GM10248 (cell line): ENCODE measurements at regions of chr14 and their contacts with region 1.

Region 1: GRCh38 chr14:50860478-50861086 is 11.3 kb upstream of the ABHD12B start:
- DNase-seq: peak; percentile 81
- CTCF ChIP-seq: peak; percentile 76

Region 2: GRCh38 chr14:50520947-50521815 is 339.4 kb before region 1 on chr14:
- CTCF ChIA-PET with region 1: no interaction called
- POLR2A ChIA-PET with region 1: no interaction called
- DNase-seq: peak; percentile 40
- CTCF ChIP-seq: no peak

Region 3: DNA sequence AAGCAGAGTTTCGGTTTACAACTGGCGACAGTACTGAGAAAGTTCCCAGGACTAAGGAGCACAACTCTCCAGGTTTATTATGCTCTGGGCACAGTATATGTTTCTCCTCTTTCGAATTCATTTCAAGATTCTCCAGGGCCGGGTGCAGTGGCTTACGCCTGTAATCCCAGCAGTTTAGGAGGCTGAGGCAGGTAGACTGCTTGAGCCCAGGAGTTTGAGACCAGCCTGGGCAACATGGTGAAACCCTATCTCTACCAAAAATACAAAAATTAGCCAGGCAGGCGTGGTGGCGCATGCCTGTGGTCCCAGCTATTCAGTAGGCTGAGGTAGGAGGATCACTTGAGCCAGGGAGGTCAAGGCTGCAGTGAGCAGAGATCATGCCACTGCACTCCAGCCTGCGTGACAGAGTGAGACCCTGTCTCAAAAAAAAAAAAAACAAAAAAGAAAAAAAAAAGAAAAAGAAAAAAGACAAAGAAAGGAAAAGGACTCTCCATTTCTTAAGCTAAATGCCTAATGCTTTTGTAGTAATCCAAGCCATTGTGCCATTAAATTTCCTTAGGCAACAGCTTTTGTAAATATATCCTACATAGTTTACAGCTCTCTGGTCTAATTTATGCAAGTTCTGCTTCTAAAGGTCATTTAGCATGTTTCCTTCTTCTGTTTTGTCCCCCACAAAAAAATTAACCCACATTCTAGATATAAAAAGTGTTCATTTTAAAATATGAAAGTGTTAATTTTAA is 265.8 kb before region 1 on chr14:
- CTCF ChIA-PET with region 1: interaction called, 22 read pairs
- POLR2A ChIA-PET with region 1: no interaction called
- DNase-seq: no peak
- CTCF ChIP-seq: no peak

Region 4: DNA sequence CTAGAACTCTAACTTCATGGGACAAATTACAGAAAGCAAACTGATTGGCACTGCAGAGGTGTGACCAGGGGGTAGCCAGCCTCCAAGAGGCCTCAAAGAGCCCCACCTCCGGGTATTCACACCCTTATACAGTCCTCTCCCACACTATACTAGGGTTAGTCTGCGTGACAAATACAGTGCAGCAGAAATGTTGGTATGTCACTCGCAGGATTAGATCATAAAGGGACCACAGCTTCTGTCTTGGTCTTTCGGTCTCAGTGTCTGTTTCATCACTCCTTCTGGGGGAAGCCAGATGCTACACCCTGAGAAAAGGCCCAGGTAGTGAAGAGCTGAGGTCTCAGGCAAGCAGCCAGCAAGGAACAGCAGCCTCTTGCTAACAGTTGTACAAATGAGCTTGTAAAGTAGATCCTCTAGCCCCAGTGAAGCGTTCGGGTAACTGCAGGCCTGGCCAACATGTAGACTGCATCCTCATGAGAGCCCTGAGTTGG is 123.6 kb before region 1 on chr14:
- CTCF ChIA-PET with region 1: interaction called, 16 read pairs
- POLR2A ChIA-PET with region 1: interaction called, 12 read pairs
- DNase-seq: peak; percentile 70
- CTCF ChIP-seq: no peak

Region 5: DNA sequence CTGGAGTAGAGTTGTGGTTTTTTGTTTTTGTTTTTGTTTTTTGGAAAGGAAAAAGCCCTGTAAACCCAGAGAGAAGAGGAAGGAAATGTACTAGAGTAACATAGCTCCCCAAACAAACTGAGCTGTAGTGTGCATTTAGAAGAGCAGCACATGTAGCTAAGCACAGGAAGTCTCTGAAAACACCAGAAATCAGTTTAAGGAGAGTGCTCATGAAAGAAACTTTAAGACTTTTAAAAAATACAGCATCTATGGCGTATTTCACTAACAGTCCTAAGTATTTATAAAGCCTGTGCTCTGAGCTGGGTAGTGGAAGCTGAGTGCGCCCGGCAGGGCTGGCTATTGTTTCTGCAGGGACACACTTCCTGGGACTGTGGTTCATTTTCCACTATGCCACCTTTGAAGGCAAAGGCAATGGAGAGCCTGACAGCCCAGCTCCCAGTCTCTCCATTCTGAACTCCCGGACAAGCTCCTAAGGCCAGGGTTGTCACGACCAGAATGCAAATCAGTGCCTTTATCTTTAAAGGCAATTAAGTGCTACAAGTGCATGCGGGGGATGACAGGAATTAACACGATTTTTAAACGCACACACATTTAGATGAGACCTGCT is 75.0 kb before region 1 on chr14:
- CTCF ChIA-PET with region 1: interaction called, 112 read pairs
- POLR2A ChIA-PET with region 1: no interaction called
- DNase-seq: no peak
- CTCF ChIP-seq: no peak

Region 6: DNA sequence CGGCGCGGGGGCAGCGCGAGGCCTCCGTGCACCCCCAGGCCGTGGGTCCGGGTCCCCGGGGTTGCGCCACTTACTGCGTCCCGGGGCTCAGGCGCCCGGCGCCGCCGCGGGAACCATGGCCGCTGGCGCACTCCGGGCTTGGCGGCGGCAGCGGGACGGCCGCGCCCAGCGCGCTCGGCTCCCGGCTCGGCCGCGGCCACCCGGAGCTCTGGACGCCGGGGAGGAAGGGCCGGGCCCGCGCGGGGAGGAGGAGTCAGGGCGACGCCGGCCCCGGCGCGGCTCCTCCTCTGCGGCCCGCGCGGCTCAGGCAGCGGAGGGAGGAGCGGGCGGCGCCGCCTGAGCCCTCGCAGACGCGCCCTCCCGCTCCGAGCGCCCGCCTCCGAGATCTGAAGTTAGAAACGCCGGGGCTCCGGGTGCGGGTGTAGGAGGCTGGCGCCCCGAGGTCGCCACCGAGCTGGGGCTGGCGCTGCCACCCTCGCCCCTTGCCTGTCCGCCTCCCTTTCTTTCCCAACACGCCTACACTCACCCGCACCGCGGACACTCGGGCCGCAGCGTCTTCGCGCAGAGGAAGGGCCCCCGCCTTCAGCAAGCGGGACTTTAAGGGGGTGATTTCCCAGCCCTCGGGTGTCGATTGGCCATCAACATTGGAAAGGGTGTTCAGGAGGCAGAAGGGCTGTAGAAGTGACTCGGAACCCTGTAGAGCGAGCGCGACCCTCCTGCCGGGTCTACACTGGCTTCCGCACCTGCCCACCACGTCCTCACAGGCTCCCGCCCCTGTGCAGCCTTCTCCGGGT is 29.5 kb before region 1 on chr14 and contains the start of gene NIN:
- CTCF ChIA-PET with region 1: interaction called, 41 read pairs
- POLR2A ChIA-PET with region 1: no interaction called
- DNase-seq: peak; percentile 89
- CTCF ChIP-seq: no peak

Region 7: DNA sequence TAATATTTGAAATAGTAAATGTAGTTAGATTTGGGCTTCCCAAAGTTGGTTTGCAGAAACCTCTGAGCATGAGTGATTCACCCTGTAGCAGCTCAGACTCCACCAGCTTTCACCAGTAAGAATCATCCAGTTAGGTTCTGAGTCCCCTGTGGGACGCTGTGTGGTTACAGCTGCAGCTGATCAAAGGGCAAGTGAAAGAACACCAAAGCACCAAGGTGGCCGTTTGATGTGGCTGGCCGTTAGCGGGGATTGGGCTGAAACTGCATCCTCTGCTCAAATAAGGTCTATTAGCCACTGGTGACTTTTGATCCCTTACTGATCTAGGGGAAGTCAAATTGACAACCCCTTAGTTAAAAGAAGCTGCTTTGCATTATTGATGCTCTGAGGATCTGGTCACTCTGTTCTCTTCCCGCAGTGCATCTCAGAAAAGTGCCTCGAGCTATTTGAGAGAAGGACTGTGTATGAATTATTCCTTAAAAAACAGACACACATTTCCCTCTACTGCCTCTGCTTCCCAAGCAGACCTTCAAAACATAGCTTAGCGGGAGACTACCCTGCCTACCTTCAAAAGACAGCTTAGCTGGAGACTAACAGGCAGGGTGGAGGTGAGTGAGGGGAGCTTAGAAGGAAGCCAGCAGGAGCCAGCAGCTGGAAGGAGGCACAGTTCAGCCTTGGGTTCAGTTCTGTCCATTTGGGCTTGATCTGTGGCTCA is 14.9 kb after region 1 on chr14:
- CTCF ChIA-PET with region 1: interaction called, 47 read pairs
- POLR2A ChIA-PET with region 1: no interaction called
- DNase-seq: peak; percentile 78
- CTCF ChIP-seq: no peak

Region 8: GRCh38 chr14:50897658-50898175 is 37.1 kb after region 1 on chr14:
- CTCF ChIA-PET with region 1: no interaction called
- POLR2A ChIA-PET with region 1: no interaction called
- DNase-seq: no peak
- CTCF ChIP-seq: no peak